ENCODE measurements at regions of chr1 and their contacts with region 1.

Region 1: DNA sequence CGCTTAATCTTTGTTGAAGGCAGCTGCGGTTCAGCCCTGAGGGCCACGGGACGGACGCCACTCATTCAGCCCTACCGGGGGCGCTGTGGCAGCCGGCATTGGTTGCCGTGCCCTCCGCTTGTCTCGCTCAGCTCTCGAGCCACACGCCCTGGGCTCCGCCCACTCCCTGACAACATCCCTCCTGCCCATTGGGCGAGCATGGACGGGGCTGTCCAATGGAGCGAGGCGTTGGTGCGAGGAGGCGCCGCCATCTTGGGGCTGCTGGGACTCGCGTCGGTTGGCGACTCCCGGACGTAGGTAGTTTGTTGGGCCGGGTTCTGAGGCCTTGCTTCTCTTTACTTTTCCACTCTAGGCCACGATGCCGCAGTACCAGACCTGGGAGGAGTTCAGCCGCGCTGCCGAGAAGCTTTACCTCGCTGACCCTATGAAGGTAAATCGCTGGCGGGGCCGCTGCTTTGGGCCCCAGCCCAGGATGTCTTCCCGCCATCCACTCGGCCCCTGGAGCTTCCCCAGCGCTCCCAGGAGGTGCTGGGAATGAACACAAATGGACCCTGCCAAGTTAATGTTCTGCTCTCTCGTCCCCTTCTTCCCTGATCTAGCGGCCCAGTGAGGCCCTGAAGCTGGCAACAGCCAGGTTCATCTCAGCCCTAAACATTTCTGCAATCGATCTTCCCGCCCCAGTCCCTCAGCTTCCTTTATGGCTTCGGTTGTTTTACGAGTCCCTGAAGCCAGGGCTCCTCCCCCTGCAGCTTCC is at the start of gene SRP9:
- DNase-seq: peak; percentile 100
- H3K4me3 ChIP-seq: peak within 1 kb of the TSS; percentile 100
- H3K27ac ChIP-seq: peak within 1 kb of the TSS; percentile 94
- H3K4me1 ChIP-seq: peaks cover 31% of the 10 kb centered on the region
- H3K27me3 ChIP-seq: no peaks in the 10 kb centered on the region
- total RNA-seq, gene SRP9: 321 and 446 TPM in 2 replicates

Region 2: GRCh38 chr1:225474986-225475820 is 302.6 kb before region 1 on chr1:
- in situ Hi-C with region 1: loop called (anchors 10 kb)
- DNase-seq: peak; percentile 73
- H3K4me3 ChIP-seq: no peak overlapping the region
- H3K27ac ChIP-seq: no peak overlapping the region
- H3K4me1 ChIP-seq: no peaks in the 10 kb centered on the region
- H3K27me3 ChIP-seq: no peaks in the 10 kb centered on the region

Region 3: DNA sequence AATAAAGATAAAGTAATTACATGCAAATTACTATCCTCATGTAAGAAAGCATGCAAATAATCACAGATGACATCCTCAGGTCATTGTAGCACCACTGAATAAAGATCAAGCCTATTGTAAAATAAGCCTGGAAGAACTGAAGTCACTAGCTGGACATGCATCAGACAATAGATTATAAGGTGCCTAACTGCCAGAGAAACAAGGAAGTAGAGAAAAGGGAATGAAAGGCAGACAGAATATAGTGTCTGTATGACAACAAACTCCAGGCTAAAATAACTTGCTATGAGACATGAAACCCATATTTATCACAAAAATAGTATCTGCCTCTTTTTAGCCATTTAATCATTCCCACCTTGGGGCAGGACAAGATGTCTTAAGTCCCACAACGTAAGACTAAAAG is 233.5 kb before region 1 on chr1:
- in situ Hi-C with region 1: loop called (anchors 10 kb)
- DNase-seq: no peak
- H3K4me3 ChIP-seq: no peak overlapping the region
- H3K27ac ChIP-seq: no peak overlapping the region
- H3K4me1 ChIP-seq: peaks cover 10% of the 10 kb centered on the region
- H3K27me3 ChIP-seq: no peaks in the 10 kb centered on the region

Measured in GM23248 (cell line).